Esophagus squamous epithelium (tissue), 5 donors: ENCODE measurements at regions of chr10 and their contacts with region 1.

Region 1: GRCh38 chr10:125982260-125982948 is 86.0 kb downstream of the FANK1 start:
- DNase-seq: no peak
- H3K4me3 ChIP-seq: no peak overlapping the region
- H3K27ac ChIP-seq: no peak overlapping the region
- H3K4me1 ChIP-seq: no peaks in the 10 kb centered on the region
- H3K27me3 ChIP-seq: no peaks in the 10 kb centered on the region
- CTCF ChIP-seq: peak; percentile 48 to 74 (median 60)
- POLR2A ChIP-seq: no peak

Region 2: DNA sequence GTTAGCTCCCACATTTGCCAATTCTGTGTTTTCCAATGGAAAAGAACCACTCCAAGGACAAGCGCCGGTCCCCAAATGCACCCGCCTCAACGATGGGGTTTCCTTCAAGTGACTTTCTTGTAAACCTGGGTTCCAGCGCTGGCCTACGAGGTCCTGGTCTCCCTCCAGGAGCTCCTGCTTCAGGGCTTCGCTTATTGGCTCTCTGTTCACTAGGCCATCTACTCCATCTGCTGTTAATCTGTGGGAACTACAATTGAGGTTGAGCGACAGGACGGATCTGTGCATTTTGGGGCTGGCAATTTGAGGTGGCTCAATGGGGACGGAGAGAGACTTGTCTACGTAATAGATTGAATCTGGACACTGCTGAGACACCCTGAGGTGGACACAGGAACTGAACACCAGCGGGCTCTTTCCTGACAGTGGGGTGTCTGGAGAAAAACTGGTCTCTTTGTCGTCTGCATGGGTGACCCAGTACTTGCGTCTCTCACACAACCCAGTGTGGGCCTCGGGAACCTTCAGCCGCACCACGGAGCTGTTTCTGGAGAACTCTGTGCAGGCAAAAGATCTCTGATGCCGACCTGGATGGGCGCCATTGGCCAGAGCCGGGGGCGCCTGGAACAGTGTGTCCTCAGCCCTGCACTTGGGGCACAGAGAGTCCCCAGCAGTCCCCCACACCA is 521.8 kb after region 1 on chr10:
- intact Hi-C with region 1: loop called (anchors 10 kb)
- DNase-seq: no peak
- H3K4me3 ChIP-seq: no peak overlapping the region
- H3K27ac ChIP-seq: no peak overlapping the region
- H3K4me1 ChIP-seq: no peaks in the 10 kb centered on the region
- H3K27me3 ChIP-seq: peaks cover 0 to 23% (median 0%) of the 10 kb centered on the region in 4 donors
- CTCF ChIP-seq: peak in 5 of 6 experiments; percentile 44 to 75 (median 56)
- POLR2A ChIP-seq: no peak